Posterior vena cava (tissue), 2 donors: ENCODE measurements at regions of chr16 and their contacts with region 1.

Region 1: GRCh38 chr16:78609402-78610274 is 510.2 kb downstream of the WWOX start:
- DNase-seq: no peak

Region 2: DNA sequence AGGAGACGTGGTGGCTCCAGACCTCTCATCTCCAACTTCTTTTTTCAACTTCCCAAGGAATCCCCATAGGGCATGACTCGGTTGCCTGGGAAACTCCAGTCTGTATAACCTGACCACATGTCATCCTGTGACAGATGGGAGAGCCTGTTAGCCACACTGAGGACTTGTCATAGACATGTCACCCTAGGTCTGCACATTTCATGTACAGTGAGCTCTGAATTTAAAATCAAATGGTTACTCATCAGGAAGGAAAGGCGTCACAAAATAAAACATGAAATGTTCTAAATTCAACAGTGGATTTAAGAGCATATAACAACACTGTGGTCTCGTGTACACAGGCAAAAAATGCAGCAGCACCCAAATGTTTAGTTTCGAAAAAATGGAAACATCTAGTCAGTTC is 1152.6 kb before region 1 on chr16:
- intact Hi-C with region 1: no loop called
- DNase-seq: no peak

Region 3: GRCh38 chr16:78288888-78289287 is 320.8 kb before region 1 on chr16:
- intact Hi-C with region 1: loop called in 1 of 2 experiments (anchors 10 kb)
- DNase-seq: no peak